ENCODE measurements at regions of chr9 and their contacts with region 1.

Region 1: DNA sequence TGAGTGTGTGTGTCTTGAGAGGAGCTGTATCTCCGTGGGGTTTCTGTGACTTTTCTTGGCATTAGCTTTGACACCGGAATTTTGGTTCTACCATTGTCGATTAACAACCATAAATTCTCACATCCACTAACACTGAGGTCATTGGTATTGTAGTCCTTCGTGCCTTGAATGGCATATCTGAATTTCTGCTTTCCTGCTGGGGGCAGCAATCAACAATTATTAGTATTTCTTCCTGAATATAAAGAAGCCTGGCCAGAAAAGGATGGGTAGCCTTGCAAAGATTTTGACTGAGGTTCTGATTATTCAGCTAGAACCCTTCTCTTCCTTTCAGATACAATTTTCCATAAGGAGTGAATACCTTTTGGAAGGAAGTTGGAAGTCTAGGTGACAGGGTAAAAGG is 33.5 kb upstream of the SHOC1 start:
- DNase-seq: peak in 2 of 9 experiments; percentile 30 to 41
- ATAC-seq: no peak
- H3K4me3 ChIP-seq: no peak overlapping the region
- H3K4me3 Mint-ChIP-seq: no peak overlapping the region
- H3K27ac ChIP-seq: no peak overlapping the region
- H3K27ac Mint-ChIP-seq: no peak overlapping the region
- H3K4me1 ChIP-seq: no peaks in the 10 kb centered on the region
- H3K4me1 Mint-ChIP-seq: no peaks in the 10 kb centered on the region
- H3K27me3 ChIP-seq: peaks cover 0 to 3% of the 10 kb centered on the region in 2 experiments
- H3K27me3 Mint-ChIP-seq: no peaks in the 10 kb centered on the region
- CTCF ChIP-seq: no peak

Region 2: GRCh38 chr9:111759762-111760639 is 68.2 kb before region 1 on chr9:
- CTCF ChIA-PET with region 1: no interaction called
- POLR2A ChIA-PET with region 1: no interaction called
- intact Hi-C with region 1: loop called in 1 of 2 experiments (anchors 5 kb)
- DNase-seq: peak in 7 of 9 experiments; percentile 6 to 79 (median 41)
- ATAC-seq: peak; percentile 67
- H3K4me3 ChIP-seq: no peak overlapping the region
- H3K4me3 Mint-ChIP-seq: no peak overlapping the region
- H3K27ac ChIP-seq: no peak overlapping the region
- H3K27ac Mint-ChIP-seq: no peak overlapping the region
- H3K4me1 ChIP-seq: no peaks in the 10 kb centered on the region
- H3K4me1 Mint-ChIP-seq: peaks cover 4% of the 10 kb centered on the region
- H3K27me3 ChIP-seq: no peaks in the 10 kb centered on the region
- H3K27me3 Mint-ChIP-seq: no peaks in the 10 kb centered on the region
- CTCF ChIP-seq: peak; percentile 81

Region 3: GRCh38 chr9:111916234-111916645 is 88.0 kb after region 1 on chr9:
- CTCF ChIA-PET with region 1: no interaction called
- POLR2A ChIA-PET with region 1: no interaction called
- intact Hi-C with region 1: loop called in 1 of 2 experiments (anchors 10 kb)
- DNase-seq: no peak
- ATAC-seq: no peak
- H3K4me3 ChIP-seq: no peak overlapping the region
- H3K4me3 Mint-ChIP-seq: peak overlapping the region; percentile 37
- H3K27ac ChIP-seq: peak overlapping the region in 1 of 2 experiments; percentile 1
- H3K27ac Mint-ChIP-seq: peak overlapping the region; percentile 19
- H3K4me1 ChIP-seq: peaks cover 38% of the 10 kb centered on the region
- H3K4me1 Mint-ChIP-seq: peaks cover 55% of the 10 kb centered on the region
- H3K27me3 ChIP-seq: no peaks in the 10 kb centered on the region
- H3K27me3 Mint-ChIP-seq: no peaks in the 10 kb centered on the region
- CTCF ChIP-seq: no peak